ENCODE measurements at regions of chr2 and their contacts with region 1.

Region 1: DNA sequence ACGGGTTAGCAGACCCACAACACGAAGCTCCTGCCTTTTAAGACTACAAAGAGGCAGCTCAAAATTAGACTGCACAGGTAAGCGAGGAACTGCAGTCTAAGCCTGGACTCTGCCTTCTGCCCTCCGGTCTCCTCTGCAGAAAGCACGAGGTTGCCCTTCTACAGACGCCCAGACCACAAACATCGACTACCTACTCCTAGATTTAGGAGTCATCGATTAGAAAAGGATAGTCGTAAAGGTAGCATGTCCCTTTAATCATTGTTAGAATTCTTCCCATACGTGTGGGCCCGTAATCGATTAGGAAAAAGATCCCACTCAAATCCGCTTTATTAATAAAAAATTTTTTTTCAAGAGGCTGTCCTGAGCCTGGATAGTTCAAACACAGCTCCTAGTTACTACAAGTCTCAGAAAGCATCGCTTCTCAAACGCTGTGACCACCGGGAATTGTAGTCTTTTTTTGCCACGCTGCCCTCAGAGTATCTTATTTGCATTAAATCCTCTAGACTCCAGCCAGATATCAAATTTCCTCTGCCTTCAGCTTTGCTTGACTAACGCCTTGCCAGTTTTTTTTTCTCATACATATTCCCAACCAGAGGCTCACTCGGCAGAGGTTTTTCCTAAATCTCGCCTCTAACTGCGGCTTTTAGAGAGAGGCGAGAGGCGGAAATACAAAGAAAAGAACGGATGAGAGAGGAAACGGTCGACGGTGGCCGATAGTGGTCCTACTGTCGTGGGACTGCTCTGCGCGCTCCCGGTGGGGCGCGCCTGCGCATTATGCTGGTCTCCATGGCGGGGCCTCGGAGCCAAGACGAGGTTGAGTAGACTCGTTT is at the starts of genes CARF and WDR12:
- DNase-seq: peak; percentile 93
- H3K4me3 Mint-ChIP-seq: peak within 1 kb of the TSS; percentile 91
- H3K27ac Mint-ChIP-seq: peak within 1 kb of the TSS; percentile 95
- H3K4me1 Mint-ChIP-seq: peaks cover 34% of the 10 kb centered on the region
- H3K27me3 Mint-ChIP-seq: no peaks in the 10 kb centered on the region
- total RNA-seq, gene CARF: 11.9 to 12.3 TPM
- total RNA-seq, gene WDR12: 41.3 to 42.1 TPM

Region 2: GRCh38 chr2:202870431-202871299 is 41.1 kb before region 1 on chr2:
- CTCF ChIA-PET with region 1: interaction called, 3 read pairs
- POLR2A ChIA-PET with region 1: interaction called, 14 read pairs
- DNase-seq: peak; percentile 69
- H3K4me3 Mint-ChIP-seq: peak overlapping the region; percentile 81
- H3K27ac Mint-ChIP-seq: peak overlapping the region; percentile 47
- H3K4me1 Mint-ChIP-seq: peaks cover 12% of the 10 kb centered on the region
- H3K27me3 Mint-ChIP-seq: no peaks in the 10 kb centered on the region

Measured in activated CD4-positive, alpha-beta memory T cell treated with anti-CD3 and anti-CD28 coated beads, Interleukin-2, amount 10 ng/mL, durations not matched to agents 7 days and 5 days (primary cell).